Left ventricle myocardium superior (tissue), 1 donor: ENCODE measurements at regions of chr17 and their contacts with region 1.

Region 1: DNA sequence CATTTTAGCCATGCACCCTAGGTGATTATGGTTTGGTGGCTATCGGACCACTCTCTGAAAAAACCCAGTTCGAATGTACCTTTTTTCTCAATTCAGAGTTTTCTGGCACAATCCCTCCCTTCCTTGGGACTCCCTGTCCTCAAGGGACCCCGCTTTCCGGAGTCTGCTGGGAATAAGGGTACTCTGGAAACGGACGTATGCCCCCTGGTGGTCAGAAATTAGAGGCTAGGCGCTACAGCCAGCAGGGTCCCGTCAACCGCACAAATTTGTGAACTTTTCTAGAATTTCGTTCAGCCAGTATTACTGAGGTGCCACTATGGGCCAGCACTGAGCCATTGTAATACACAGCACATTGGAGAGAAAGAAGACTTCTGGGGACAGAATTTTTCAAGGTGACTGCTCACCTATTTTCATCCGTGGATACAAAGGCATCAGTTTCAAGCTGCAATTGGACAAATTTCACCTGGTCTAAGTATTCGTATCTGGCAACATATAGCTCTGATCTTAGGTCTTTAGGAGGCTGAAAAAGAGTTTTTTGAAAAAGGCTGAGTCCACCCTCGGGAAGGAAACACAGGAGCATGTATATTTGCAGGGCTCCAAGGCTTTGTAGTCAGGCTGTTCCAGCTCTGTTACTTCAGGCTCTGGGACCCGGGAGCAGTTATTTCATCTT is 27.1 kb upstream of the CRYBA1 start:
- DNase-seq: peak; percentile 68
- ATAC-seq: peak; percentile 91

Region 2: DNA sequence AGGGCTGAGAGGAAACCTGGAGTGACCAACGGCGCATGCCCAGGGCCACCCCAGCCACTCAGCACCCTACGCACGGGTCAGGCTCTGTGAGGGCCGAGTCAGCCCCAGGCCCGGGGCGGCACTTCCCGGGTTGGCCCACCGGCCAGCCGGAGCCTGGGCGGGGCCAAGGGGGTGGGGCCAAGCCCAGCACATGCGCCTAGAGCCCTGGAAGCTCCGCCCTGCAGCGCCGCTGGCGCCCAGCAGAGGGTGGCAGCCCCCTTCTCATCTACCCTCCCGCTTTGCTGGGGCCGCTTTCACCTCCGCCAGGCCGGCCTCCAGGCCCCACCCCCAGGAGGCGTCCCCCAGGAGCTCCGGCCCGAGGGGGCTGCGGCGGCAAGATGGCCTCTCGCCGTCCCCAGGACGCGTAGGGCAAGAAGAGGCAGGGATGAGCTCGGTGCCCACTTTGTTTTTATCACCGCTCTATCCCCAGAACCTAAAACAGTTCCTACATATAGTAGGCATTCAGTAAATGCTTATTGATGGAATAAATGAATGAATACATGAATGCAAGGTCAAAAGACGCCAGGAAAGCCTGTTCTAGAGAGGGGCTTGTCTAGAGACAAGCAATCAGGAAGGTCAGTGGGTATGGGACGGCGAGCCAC is 70.6 kb before region 1 on chr17:
- intact Hi-C with region 1: loop called (anchors 5 kb)
- DNase-seq: peak; percentile 98
- ATAC-seq: peak; percentile 94